ENCODE measurements at regions of chr14 and their contacts with region 1.

Region 1: DNA sequence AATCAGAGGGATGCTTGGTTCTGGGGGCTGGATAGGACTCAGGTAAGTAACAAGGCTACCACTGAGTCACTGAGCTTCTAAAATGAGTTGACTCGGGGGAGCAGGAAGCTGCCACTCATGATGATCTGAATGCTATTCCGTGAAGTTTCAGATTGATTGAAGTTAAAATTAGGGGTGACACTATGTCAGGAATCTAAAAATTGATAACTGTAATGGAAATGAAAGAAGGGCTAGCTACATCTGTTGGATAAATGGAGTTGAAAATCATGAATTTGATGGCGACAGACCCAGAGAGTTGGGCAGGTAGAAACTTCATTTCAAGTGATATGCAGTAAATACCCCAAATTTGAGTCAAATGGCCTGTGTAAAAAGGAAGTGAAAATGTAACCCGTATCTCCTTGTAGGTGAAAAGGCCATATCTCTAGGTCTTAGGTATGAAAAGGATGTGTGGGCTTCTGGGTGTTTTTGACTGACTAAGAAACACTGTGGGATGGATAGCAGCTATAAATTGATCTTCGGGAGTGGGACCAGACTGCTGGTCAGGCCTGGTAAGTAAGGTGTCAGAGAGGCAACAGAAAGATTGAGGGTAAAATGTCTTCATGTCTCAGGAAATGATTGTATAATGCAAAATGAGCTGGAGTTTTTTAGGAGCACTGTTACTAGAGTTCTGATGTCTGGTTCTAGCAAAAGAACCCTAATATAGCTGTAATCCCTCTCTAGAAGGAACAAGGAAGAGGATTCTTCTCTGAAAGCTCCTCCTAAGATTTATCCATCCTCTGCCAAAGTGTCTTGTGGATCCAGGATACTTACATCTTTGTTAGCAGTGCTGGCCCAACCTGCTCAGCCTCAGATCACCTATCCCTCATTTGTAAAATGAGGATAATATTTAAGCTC is 57.3 kb downstream of the DAD1 start:
- DNase-seq: peak; percentile 66
- ATAC-seq: peak; percentile 71
- H3K4me3 Mint-ChIP-seq: peak overlapping the region; percentile 79
- H3K27ac Mint-ChIP-seq: peak overlapping the region; percentile 94
- H3K4me1 Mint-ChIP-seq: peaks cover 77% of the 10 kb centered on the region
- H3K27me3 Mint-ChIP-seq: no peaks in the 10 kb centered on the region
- CTCF ChIP-seq: no peak

Region 2: DNA sequence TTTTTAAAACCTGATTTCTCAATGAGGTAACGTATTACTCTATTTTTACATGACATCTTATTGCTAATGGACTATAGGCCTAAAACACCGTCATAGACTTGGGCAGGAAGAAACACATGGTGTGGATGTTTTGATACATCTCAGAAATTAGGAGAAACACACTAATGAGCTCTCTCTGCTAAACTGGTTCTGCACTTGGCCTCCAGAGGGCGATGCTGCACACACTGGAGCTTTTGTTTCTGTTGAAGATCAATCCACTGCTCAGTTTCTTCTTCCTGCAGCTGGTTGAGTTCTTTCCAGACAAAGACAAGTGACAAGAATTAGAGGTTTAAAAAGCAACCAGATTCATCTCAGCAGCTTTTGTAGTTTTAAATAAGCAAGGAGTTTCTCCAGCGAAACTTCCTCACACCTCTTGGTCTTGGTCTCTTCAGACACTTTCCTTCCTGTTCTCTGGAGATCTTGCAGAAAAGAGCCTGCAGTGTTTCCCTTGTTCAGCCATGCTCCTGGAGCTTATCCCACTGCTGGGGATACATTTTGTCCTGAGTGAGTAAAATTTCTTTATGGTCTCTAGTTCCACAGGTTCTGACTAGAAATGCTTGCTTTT is 679.5 kb before region 1 on chr14:
- CTCF ChIA-PET with region 1: interaction called, 6 read pairs
- POLR2A ChIA-PET with region 1: interaction called, 10 read pairs
- intact Hi-C with region 1: no loop called
- DNase-seq: peak; percentile 89
- ATAC-seq: peak; percentile 83
- H3K4me3 Mint-ChIP-seq: peak overlapping the region; percentile 79
- H3K27ac Mint-ChIP-seq: peak overlapping the region; percentile 80
- H3K4me1 Mint-ChIP-seq: peaks cover 6% of the 10 kb centered on the region
- H3K27me3 Mint-ChIP-seq: peaks cover 7% of the 10 kb centered on the region
- CTCF ChIP-seq: peak; percentile 71

Region 3: GRCh38 chr14:21997300-21997699 is 534.4 kb before region 1 on chr14:
- CTCF ChIA-PET with region 1: interaction called, 3 read pairs
- POLR2A ChIA-PET with region 1: interaction called, 11 read pairs
- intact Hi-C with region 1: no loop called
- DNase-seq: peak; percentile 66
- ATAC-seq: peak; percentile 88
- H3K4me3 Mint-ChIP-seq: peak overlapping the region; percentile 95
- H3K27ac Mint-ChIP-seq: peak overlapping the region; percentile 96
- H3K4me1 Mint-ChIP-seq: peaks cover 20% of the 10 kb centered on the region
- H3K27me3 Mint-ChIP-seq: no peaks in the 10 kb centered on the region
- CTCF ChIP-seq: peak; percentile 33

Region 4: GRCh38 chr14:22464422-22465142 is 67.1 kb before region 1 on chr14:
- CTCF ChIA-PET with region 1: no interaction called
- POLR2A ChIA-PET with region 1: no interaction called
- intact Hi-C with region 1: no loop called
- DNase-seq: no peak
- ATAC-seq: no peak
- H3K4me3 Mint-ChIP-seq: no peak overlapping the region
- H3K27ac Mint-ChIP-seq: no peak overlapping the region
- H3K4me1 Mint-ChIP-seq: no peaks in the 10 kb centered on the region
- H3K27me3 Mint-ChIP-seq: no peaks in the 10 kb centered on the region
- CTCF ChIP-seq: no peak

Region 5: DNA sequence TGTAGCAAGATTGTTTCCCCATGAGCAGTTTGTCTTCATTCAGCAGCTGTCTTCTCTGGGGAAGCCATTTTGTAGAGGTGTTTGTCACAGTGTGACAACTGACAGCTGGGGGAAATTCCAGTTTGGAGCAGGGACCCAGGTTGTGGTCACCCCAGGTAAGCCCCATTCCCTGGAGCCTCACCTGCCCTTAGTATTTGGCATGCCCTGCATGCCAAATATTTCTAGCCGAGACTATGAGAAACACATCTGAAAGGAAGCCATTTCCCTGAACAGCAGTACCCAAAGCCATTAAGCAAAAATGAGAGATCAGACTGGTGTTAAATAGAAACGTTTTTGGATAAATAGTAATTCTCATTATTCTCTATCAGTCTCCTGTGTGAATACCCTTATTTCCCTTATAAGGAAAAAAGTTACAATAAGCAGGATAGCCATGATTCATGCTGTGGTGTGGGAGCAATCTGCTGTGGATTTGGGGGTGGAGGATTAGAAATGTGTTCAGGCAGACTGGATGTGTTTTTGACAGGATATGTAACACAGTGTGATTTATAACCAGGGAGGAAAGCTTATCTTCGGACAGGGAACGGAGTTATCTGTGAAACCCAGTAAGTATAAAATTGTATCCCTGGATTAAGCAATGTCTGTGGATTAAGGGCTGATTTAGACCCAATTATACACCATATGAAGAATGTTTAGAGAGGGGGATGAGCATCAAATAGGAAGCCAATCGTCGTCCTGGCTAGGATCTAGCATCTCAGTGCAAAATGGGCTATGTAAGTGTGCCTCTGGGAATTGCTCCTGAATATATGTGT is 11.6 kb before region 1 on chr14:
- CTCF ChIA-PET with region 1: interaction called, 10 read pairs
- POLR2A ChIA-PET with region 1: interaction called, 1,006 read pairs
- intact Hi-C with region 1: no loop called
- DNase-seq: no peak
- ATAC-seq: peak; percentile 14
- H3K4me3 Mint-ChIP-seq: peak overlapping the region; percentile 79
- H3K27ac Mint-ChIP-seq: peak overlapping the region; percentile 96
- H3K4me1 Mint-ChIP-seq: peaks cover 68% of the 10 kb centered on the region
- H3K27me3 Mint-ChIP-seq: no peaks in the 10 kb centered on the region
- CTCF ChIP-seq: no peak

Region 6: GRCh38 chr14:22542360-22542759 is 10.7 kb after region 1 on chr14:
- CTCF ChIA-PET with region 1: interaction called, 72 read pairs
- POLR2A ChIA-PET with region 1: interaction called, 496 read pairs
- intact Hi-C with region 1: no loop called
- DNase-seq: no peak
- ATAC-seq: no peak
- H3K4me3 Mint-ChIP-seq: peak overlapping the region; percentile 79
- H3K27ac Mint-ChIP-seq: peak overlapping the region; percentile 94
- H3K4me1 Mint-ChIP-seq: peaks cover 92% of the 10 kb centered on the region
- H3K27me3 Mint-ChIP-seq: no peaks in the 10 kb centered on the region
- CTCF ChIP-seq: no peak

Region 7: GRCh38 chr14:22549981-22550673 is 18.4 kb after region 1 on chr14:
- CTCF ChIA-PET with region 1: interaction called, 72 read pairs
- POLR2A ChIA-PET with region 1: interaction called, 496 read pairs
- intact Hi-C with region 1: no loop called
- DNase-seq: peak; percentile 90
- ATAC-seq: peak; percentile 57
- H3K4me3 Mint-ChIP-seq: peak overlapping the region; percentile 79
- H3K27ac Mint-ChIP-seq: peak overlapping the region; percentile 94
- H3K4me1 Mint-ChIP-seq: peaks cover 92% of the 10 kb centered on the region
- H3K27me3 Mint-ChIP-seq: no peaks in the 10 kb centered on the region
- CTCF ChIP-seq: no peak

Measured in activated CD8-positive, alpha-beta T cell treated with anti-CD3 and anti-CD28 coated beads for 36 hours (primary cell).